Caco-2 (cell line): ENCODE measurements at regions of chr6 and their contacts with region 1.

Region 1: DNA sequence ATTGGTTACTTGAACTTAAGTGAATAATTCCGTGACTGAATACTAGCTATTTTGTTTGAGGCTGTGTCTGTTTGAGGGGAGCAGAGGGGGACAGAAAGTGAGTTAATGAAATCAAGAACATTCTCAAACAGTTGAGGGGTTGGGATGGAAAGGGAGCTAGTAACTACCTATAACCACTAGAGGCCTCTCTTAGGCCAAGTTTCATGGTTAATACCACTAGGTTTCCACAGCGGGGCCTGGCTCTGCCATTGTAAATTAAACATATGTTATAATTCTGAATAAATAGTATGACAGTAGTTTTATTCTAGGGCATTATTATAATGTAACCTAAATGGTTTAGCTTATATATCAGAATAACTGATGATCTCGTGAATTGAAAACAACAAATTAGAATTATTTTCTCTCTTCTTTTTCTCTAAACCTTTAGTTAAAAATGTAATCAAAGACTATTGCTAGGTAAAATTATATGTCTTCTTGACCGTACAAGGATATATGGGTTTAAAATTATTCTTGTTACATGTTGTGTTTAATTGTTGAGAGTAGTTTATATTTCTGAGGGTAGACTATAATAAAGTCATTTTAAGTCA is 108.1 kb downstream of the BCKDHB start:
- DNase-seq: peak in 1 of 2 experiments; percentile 33
- H3K4me3 ChIP-seq: no peak overlapping the region
- H3K4me3 Mint-ChIP-seq: no peak overlapping the region
- H3K27ac Mint-ChIP-seq: no peak overlapping the region
- H3K4me1 ChIP-seq: peaks cover 36% of the 10 kb centered on the region
- H3K4me1 Mint-ChIP-seq: peaks cover 25% of the 10 kb centered on the region
- H3K27me3 ChIP-seq: no peaks in the 10 kb centered on the region
- H3K27me3 Mint-ChIP-seq: no peaks in the 10 kb centered on the region
- CTCF ChIP-seq: peak; percentile 71 to 78

Region 2: DNA sequence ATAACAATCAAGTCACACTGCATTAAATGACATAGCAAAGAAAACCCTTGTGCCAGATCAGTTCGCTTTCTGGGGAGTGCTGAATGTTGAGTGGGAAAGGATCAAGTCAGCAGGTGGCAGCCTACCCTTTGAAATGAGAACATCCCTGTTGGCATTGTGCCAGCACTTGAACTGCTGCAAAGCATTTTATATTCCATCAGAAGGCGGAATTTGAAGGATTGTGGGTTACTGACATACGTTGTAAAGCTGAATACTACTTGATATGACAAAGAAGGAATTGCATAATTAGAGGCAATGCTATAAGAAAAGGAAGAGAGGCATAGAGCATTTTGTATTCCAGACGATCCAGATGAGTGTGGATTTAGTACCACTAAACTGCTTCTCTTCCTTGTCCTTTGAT is 81.5 kb before region 1 on chr6:
- CTCF ChIA-PET with region 1: no interaction called
- POLR2A ChIA-PET with region 1: no interaction called
- intact Hi-C with region 1: loop called (anchors 5 kb)
- DNase-seq: peak in 1 of 2 experiments; percentile 12
- H3K4me3 ChIP-seq: no peak overlapping the region
- H3K4me3 Mint-ChIP-seq: no peak overlapping the region
- H3K27ac Mint-ChIP-seq: peak overlapping the region; percentile 20
- H3K4me1 ChIP-seq: peaks cover 8% of the 10 kb centered on the region
- H3K4me1 Mint-ChIP-seq: peaks cover 11% of the 10 kb centered on the region
- H3K27me3 ChIP-seq: no peaks in the 10 kb centered on the region
- H3K27me3 Mint-ChIP-seq: no peaks in the 10 kb centered on the region
- CTCF ChIP-seq: peak in 1 of 2 experiments; percentile 10

Region 3: DNA sequence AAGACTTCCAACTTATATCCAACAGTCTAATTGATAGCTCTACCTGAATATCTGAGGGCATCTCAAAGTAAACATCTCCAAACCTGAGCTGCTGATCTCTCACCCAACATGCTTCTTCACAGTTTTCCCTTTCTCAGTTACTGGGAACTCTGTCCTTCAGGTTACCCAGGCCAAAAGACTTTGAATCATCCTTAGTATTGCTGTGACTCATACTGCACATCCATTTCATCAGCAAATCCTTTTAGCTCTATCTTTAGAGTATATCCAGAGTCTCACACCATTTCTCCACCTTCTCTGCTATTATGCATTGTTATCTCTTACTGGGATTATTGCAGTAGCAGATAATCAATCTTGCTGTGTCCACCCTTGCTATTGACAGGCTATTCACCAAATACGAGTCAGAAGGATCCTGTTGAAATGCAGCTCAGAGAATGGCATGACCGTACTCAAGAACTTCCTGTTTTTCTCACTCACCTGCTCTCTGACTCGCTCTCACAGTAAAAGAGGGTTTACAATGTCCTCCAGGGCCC is 50.8 kb before region 1 on chr6:
- CTCF ChIA-PET with region 1: no interaction called
- POLR2A ChIA-PET with region 1: no interaction called
- intact Hi-C with region 1: no loop called
- DNase-seq: peak in 1 of 2 experiments; percentile 15
- H3K4me3 ChIP-seq: no peak overlapping the region
- H3K4me3 Mint-ChIP-seq: no peak overlapping the region
- H3K27ac Mint-ChIP-seq: no peak overlapping the region
- H3K4me1 ChIP-seq: no peaks in the 10 kb centered on the region; the same call in none of the 2 replicates
- H3K4me1 Mint-ChIP-seq: no peaks in the 10 kb centered on the region
- H3K27me3 ChIP-seq: no peaks in the 10 kb centered on the region
- H3K27me3 Mint-ChIP-seq: no peaks in the 10 kb centered on the region
- CTCF ChIP-seq: no peak

Region 4: DNA sequence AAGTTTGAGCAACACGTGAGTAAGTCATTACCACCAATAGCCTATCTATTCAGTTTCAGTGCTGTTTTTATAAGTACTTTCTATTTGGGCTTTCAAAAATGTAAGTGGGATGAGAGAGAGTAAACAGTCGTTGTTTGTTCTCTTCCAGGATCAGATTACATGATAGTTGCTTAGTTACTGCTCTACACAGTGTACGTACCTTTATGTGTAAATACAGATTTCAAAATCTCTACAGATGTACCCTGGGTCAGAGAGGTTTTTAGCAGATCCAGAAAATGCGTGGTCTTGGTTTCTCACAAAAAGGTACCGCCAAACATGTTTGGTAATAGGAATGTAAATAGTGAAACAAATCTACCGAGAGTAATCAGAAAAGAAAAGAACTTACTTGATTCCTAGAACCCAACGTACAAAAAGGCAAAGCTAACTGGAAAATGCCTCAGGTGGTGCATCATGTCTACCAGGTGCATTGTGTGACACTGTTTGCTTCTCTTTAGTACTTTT is 313.1 kb after region 1 on chr6:
- CTCF ChIA-PET with region 1: no interaction called
- POLR2A ChIA-PET with region 1: no interaction called
- intact Hi-C with region 1: loop called (anchors 5 kb)
- DNase-seq: peak in 1 of 2 experiments; percentile 48
- H3K4me3 ChIP-seq: no peak overlapping the region
- H3K4me3 Mint-ChIP-seq: peak overlapping the region; percentile 4
- H3K27ac Mint-ChIP-seq: peak overlapping the region; percentile 8
- H3K4me1 ChIP-seq: peaks cover 19% of the 10 kb centered on the region
- H3K4me1 Mint-ChIP-seq: no peaks in the 10 kb centered on the region
- H3K27me3 ChIP-seq: no peaks in the 10 kb centered on the region
- H3K27me3 Mint-ChIP-seq: no peaks in the 10 kb centered on the region
- CTCF ChIP-seq: no peak

Region 5: DNA sequence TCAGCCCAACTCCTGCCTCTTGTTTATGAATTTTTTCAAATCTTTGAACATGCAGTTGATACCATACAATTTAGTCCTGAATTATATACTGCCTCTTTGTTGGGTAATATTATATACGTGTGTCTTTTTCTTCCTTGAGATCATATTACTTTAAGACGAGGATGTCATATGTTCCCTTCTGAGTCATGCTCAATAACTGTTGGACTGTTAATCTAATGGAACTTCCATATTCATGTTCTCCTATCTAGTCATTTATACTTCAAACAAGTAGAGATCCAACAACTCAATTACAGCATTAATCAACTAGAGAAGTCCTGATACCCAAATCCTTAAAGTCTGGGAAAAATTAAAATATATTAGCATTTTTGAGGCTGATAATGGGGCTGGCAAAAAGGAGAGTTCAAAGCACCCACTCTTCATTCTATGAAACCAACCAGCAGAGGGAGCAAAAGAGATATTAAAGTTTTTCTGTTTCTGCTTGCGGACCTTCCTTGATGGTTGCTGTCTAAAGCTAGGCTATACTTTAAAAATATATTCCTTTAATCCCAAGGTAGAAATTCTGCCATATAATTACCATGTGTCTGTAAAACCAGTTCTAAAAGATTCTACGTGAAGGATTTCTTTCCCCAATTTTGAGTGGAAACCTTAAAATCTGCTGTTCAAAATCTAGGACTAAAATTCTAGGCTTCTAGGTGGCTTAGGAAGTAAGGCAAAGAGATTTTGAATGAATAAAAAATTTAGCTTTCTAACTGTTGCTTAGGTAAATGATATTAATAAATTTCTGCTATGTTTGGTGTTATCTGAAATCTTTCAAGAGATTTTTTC is 390.8 kb after region 1 on chr6:
- CTCF ChIA-PET with region 1: interaction called, 4 read pairs
- POLR2A ChIA-PET with region 1: no interaction called
- intact Hi-C with region 1: loop called (anchors 2 kb)
- DNase-seq: peak in 1 of 2 experiments; percentile 39
- H3K4me3 ChIP-seq: no peak overlapping the region
- H3K4me3 Mint-ChIP-seq: no peak overlapping the region
- H3K27ac Mint-ChIP-seq: no peak overlapping the region
- H3K4me1 ChIP-seq: no peaks in the 10 kb centered on the region
- H3K4me1 Mint-ChIP-seq: no peaks in the 10 kb centered on the region
- H3K27me3 ChIP-seq: no peaks in the 10 kb centered on the region
- H3K27me3 Mint-ChIP-seq: peaks cover 13% of the 10 kb centered on the region
- CTCF ChIP-seq: peak; percentile 59 to 64